Activated B cell treated with CpG ODN at 0.5 μM for 24 hours (primary cell): ENCODE measurements at regions of chr5 and their contacts with region 1.

Region 1: DNA sequence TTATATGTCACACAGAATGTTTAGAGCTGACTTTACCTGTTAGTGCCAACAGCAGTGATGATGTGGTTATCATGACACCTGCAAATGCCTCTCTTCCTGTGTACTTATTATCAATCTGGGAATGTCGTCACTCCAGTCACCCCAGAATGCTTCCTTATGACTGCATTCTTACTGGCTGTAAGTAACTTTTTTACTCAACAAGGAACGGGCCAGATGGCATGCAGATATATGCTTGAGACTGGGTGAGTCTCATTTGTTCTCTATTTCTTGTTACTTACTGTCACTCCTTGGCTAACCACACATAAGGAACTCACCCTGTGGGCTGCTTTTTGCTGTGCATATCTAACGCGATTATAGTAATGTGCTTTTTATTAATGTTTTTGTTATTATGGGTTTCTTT is 385.5 kb upstream of the MEF2C start:
- DNase-seq: no peak
- ATAC-seq: peak; percentile 27
- H3K4me3 Mint-ChIP-seq: peak overlapping the region; percentile 50
- H3K27ac Mint-ChIP-seq: peak overlapping the region; percentile 92
- H3K4me1 Mint-ChIP-seq: peaks cover 78% of the 10 kb centered on the region
- H3K27me3 Mint-ChIP-seq: no peaks in the 10 kb centered on the region
- CTCF ChIP-seq: no peak

Region 2: GRCh38 chr5:89303033-89303480 is 34.6 kb after region 1 on chr5:
- CTCF ChIA-PET with region 1: interaction called, 3 read pairs
- POLR2A ChIA-PET with region 1: interaction called, 10 read pairs
- intact Hi-C with region 1: loop called (anchors 5 kb)
- DNase-seq: no peak
- ATAC-seq: peak; percentile 64
- H3K4me3 Mint-ChIP-seq: no peak overlapping the region
- H3K27ac Mint-ChIP-seq: peak overlapping the region; percentile 84
- H3K4me1 Mint-ChIP-seq: peaks cover 62% of the 10 kb centered on the region
- H3K27me3 Mint-ChIP-seq: no peaks in the 10 kb centered on the region
- CTCF ChIP-seq: no peak

Region 3: DNA sequence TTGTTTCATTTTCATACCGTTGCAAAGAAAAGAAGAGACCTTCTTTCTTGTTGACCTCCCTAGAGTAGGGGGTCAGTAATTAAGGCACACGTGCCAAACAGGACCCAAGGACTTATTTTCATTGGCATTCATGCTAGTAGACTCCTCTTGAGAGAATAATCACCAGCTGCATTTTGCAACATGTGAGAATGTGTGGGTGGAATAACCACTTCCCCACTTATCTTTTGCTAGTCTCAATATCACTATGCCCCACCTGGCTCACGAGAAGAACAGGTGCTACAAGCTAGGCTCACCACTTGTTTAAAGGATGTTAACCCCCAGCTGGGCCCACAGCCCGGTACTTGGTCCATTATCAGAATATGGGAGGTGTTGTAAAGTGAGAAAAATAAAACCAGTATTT is 75.2 kb after region 1 on chr5:
- CTCF ChIA-PET with region 1: interaction called, 3 read pairs
- POLR2A ChIA-PET with region 1: interaction called, 37 read pairs
- intact Hi-C with region 1: loop called (anchors 1 kb)
- DNase-seq: peak; percentile 29
- ATAC-seq: peak; percentile 79
- H3K4me3 Mint-ChIP-seq: peak overlapping the region; percentile 42
- H3K27ac Mint-ChIP-seq: peak overlapping the region; percentile 80
- H3K4me1 Mint-ChIP-seq: peaks cover 49% of the 10 kb centered on the region
- H3K27me3 Mint-ChIP-seq: no peaks in the 10 kb centered on the region
- CTCF ChIP-seq: no peak

Region 4: DNA sequence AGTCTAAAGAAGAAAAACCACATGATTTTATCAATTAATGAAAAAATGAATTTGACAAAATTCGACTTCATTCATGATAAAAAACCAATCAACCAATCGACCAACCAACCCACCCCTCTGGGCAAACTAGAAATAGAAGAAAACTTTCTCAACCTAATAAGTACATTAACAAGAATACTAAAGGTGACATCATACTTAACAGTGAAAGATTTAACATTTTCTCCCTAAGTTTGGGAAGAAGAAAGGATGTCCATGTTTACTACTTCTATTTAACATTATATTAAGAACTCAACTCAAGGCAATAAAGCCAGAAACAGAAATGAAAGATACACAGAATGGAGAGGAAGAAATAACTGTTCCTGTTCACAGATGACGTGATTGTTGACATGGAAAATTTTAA is 90.6 kb after region 1 on chr5:
- CTCF ChIA-PET with region 1: no interaction called
- POLR2A ChIA-PET with region 1: no interaction called
- intact Hi-C with region 1: no loop called
- DNase-seq: no peak
- ATAC-seq: no peak
- H3K4me3 Mint-ChIP-seq: no peak overlapping the region
- H3K27ac Mint-ChIP-seq: no peak overlapping the region
- H3K4me1 Mint-ChIP-seq: peaks cover 11% of the 10 kb centered on the region
- H3K27me3 Mint-ChIP-seq: no peaks in the 10 kb centered on the region
- CTCF ChIP-seq: no peak

Region 5: GRCh38 chr5:89396278-89396954 is 128.0 kb after region 1 on chr5:
- CTCF ChIA-PET with region 1: no interaction called
- POLR2A ChIA-PET with region 1: interaction called, 8 read pairs
- intact Hi-C with region 1: loop called (anchors 2 kb)
- DNase-seq: no peak
- ATAC-seq: peak; percentile 59
- H3K4me3 Mint-ChIP-seq: peak overlapping the region; percentile 60
- H3K27ac Mint-ChIP-seq: peak overlapping the region; percentile 88
- H3K4me1 Mint-ChIP-seq: peaks cover 61% of the 10 kb centered on the region
- H3K27me3 Mint-ChIP-seq: no peaks in the 10 kb centered on the region
- CTCF ChIP-seq: no peak

Region 6: GRCh38 chr5:89729623-89730301 is 461.3 kb after region 1 on chr5:
- CTCF ChIA-PET with region 1: interaction called, 3 read pairs
- POLR2A ChIA-PET with region 1: interaction called, 6 read pairs
- intact Hi-C with region 1: loop called (anchors 5 kb)
- DNase-seq: no peak
- ATAC-seq: no peak
- H3K4me3 Mint-ChIP-seq: no peak overlapping the region
- H3K27ac Mint-ChIP-seq: peak overlapping the region; percentile 70
- H3K4me1 Mint-ChIP-seq: peaks cover 33% of the 10 kb centered on the region
- H3K27me3 Mint-ChIP-seq: no peaks in the 10 kb centered on the region
- CTCF ChIP-seq: no peak